ENCODE measurements at regions of chr17 and their contacts with region 1.

Region 1: GRCh38 chr17:63675607-63676413 is 24.1 kb downstream of the LIMD2 start:
- DNase-seq: peak; percentile 21
- H3K4me3 ChIP-seq: no peak overlapping the region
- CTCF ChIP-seq: no peak

Region 2: GRCh38 chr17:63665527-63666214 is 10.1 kb before region 1 on chr17:
- CTCF ChIA-PET with region 1: interaction called, 10 read pairs
- POLR2A ChIA-PET with region 1: no interaction called
- DNase-seq: no peak
- H3K4me3 ChIP-seq: no peak overlapping the region
- CTCF ChIP-seq: no peak

Measured in AG04449 (cell line).